Common myeloid progenitor, CD34-positive (primary cell): ENCODE measurements at regions of chr20 and their contacts with region 1.

Region 1: DNA sequence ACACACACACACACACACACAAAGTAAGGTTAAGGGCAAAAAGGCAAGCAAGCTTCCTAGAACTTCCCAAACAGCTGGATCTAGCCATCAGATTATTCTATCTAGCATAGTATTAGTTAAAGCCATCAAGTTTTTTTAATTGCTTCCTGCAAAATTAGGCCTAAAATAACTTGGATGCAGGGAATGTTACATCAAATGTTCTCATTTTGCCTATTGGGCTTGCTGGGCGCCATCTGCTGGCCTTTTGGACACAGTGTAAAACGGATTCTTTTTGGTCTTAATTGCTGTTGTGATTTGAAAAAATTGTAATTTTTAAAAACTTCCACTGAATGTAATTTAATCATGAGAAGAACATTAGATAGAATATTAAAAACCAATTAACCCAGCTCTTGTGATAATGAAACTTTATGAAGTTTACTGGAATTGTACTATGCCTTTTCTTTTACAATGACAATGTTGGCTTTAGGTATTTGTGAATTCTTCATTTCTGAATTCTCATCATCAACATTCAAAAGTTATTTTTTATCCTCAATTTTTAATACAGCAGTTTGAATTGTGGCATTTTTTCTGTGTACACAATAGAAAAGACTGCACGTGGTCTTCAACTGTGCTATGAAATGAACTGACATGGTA is 6.8 kb downstream of the MKKS start:
- DNase-seq: peak; percentile 61 to 76 (median 74)
- H3K4me3 ChIP-seq: no peak overlapping the region
- H3K27ac ChIP-seq: no peak overlapping the region
- H3K4me1 ChIP-seq: peaks cover 0 to 20% (median 7%) of the 10 kb centered on the region in 4 experiments
- H3K27me3 ChIP-seq: no peaks in the 10 kb centered on the region

Region 2: GRCh38 chr20:10412591-10413408 is 14.4 kb before region 1 on chr20:
- CTCF ChIA-PET with region 1: interaction called, 23 read pairs
- POLR2A ChIA-PET with region 1: no interaction called
- DNase-seq: no peak
- H3K4me3 ChIP-seq: no peak overlapping the region
- H3K27ac ChIP-seq: no peak overlapping the region
- H3K4me1 ChIP-seq: peaks cover 0 to 4% (median under 1%) of the 10 kb centered on the region in 4 experiments
- H3K27me3 ChIP-seq: no peaks in the 10 kb centered on the region

Region 3: DNA sequence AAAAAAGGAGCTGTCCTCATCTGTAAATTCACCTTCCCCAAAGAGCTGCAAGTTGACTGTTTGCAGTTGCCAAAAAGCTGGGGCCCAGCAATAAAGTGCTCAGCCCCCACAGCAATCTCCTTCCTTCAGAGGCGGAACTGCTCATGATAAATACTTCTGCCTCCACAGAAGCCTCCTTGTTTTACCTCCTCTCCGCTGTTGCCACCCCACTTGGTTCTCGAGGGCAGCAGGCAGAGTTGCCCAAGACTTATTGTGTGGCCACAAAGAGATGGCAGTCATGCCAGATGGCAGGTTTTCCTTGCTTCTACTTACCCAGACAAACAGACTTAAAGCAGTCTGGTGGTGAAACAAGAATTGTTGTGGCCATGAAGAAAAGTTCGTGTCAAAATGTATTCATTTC is 74.2 kb after region 1 on chr20:
- CTCF ChIA-PET with region 1: no interaction called
- POLR2A ChIA-PET with region 1: no interaction called
- DNase-seq: peak; percentile 53 to 93 (median 89)
- H3K4me3 ChIP-seq: peak overlapping the region in 6 of 7 experiments; percentile 32 to 62 (median 50)
- H3K27ac ChIP-seq: peak overlapping the region; percentile 71 to 82
- H3K4me1 ChIP-seq: peaks cover 28 to 97% (median 73%) of the 10 kb centered on the region in 4 experiments
- H3K27me3 ChIP-seq: no peaks in the 10 kb centered on the region